ENCODE measurements at regions of chr14 and their contacts with region 1.

Region 1: DNA sequence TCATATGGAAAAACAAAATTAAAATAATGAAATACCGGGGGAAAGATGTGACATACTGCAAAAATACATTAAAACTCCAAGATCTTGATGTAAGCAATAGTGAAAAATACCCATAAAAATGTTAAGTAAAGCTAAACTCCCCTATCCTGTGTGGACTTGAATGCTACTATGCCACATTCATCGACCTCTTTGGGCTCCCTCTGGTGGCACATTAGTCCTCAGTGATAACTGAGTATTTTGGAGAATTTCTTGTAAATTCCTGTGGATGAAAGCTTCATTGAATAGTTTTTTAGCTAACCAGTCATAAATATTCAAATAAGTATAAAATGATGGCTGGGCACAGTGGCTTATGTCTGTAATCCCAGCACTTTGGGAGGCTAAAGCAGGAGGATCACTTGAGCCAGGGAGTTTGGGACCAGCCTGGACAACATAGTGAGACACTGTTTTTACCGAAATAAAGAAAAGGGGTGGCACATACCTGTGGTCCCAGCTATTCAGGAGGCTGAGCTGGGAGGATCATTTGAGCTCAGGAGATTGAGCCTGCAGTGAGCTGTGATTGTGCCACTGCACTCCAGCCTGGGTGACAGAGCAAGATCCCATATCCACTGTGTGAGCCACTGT is 42.4 kb upstream of the SGPP1 start:
- DNase-seq: peak; percentile 75
- ATAC-seq: peak; percentile 92
- H3K4me3 Mint-ChIP-seq: no peak overlapping the region
- H3K27ac Mint-ChIP-seq: peak overlapping the region; percentile 6
- H3K4me1 Mint-ChIP-seq: peaks cover 13% of the 10 kb centered on the region
- H3K27me3 Mint-ChIP-seq: no peaks in the 10 kb centered on the region

Region 2: GRCh38 chr14:63632932-63633514 is 137.3 kb before region 1 on chr14:
- CTCF ChIA-PET with region 1: interaction called, 40 read pairs
- POLR2A ChIA-PET with region 1: interaction called, 5 read pairs
- DNase-seq: no peak
- ATAC-seq: peak; percentile 68
- H3K4me3 Mint-ChIP-seq: no peak overlapping the region
- H3K27ac Mint-ChIP-seq: no peak overlapping the region
- H3K4me1 Mint-ChIP-seq: peaks cover 25% of the 10 kb centered on the region
- H3K27me3 Mint-ChIP-seq: no peaks in the 10 kb centered on the region

Region 3: DNA sequence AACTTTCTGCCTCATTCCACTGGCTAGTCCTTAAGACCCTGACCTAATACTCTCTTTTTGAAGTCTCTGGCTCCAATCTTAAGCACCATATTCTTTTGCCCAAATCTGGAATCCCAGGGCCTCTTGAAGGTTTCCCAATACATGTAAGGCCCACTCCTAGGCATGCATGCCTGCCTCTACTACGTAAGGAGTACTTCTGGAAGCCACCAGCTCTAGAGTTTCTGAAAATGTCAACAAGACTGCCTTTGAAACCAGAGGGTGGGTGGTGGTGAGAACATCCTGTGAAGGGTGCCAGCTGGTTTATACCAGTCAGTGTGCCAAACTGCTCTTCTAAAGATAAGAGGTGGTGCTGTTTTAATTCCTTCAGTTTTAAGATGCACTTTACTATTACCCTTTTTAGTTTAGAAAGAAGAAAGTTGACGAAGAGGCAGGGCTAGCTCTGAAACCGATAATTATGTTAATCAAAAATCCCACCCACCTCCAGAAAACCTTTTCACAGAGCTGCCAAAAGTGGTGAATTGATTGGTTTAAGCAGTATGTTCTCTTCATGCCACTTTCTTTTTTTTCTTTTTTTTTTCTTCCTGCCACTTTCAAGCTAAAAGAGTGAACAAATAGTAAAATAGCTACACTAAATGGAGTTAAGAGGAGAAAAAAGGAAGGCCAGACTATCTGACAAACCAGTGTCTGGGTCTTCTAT is 119.9 kb before region 1 on chr14:
- CTCF ChIA-PET with region 1: interaction called, 15 read pairs
- POLR2A ChIA-PET with region 1: no interaction called
- DNase-seq: peak; percentile 66
- ATAC-seq: peak; percentile 87
- H3K4me3 Mint-ChIP-seq: peak overlapping the region; percentile 32
- H3K27ac Mint-ChIP-seq: peak overlapping the region; percentile 94
- H3K4me1 Mint-ChIP-seq: peaks cover 18% of the 10 kb centered on the region
- H3K27me3 Mint-ChIP-seq: no peaks in the 10 kb centered on the region

Region 4: GRCh38 chr14:63737582-63738006 is 32.7 kb before region 1 on chr14:
- CTCF ChIA-PET with region 1: interaction called, 26 read pairs
- POLR2A ChIA-PET with region 1: no interaction called
- DNase-seq: peak; percentile 36
- ATAC-seq: peak; percentile 88
- H3K4me3 Mint-ChIP-seq: peak overlapping the region; percentile 64
- H3K27ac Mint-ChIP-seq: peak overlapping the region; percentile 89
- H3K4me1 Mint-ChIP-seq: peaks cover 16% of the 10 kb centered on the region
- H3K27me3 Mint-ChIP-seq: peaks cover 3% of the 10 kb centered on the region

Region 5: DNA sequence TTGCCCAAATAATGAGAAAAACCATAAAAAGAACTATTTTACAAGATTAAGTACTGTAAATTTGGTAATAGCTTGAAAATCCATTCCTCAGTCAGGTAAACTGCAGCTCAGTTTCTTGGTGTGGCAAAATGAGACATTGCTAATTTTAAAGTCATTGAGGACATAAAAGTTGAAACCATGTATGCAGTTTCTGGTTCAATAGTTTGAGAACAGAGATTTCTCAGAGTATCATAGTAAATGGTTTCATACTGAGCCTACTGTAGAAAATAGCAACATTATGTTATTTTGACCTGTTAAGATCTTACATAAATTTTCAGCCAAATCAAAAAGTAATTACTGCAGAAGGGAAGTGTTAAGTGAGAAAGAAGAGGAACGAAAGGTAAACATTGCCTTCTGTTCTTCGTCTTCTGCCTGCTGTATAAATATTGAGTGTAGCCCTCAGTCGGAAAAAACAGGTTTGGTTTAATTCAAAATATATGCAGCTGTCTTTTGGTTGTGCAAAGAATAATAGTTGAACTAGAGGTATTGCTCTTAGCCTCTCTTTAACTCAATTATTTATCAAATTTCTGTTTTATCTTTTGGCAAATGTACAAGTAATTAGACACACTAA is 202.1 kb after region 1 on chr14:
- CTCF ChIA-PET with region 1: no interaction called
- POLR2A ChIA-PET with region 1: no interaction called
- DNase-seq: no peak
- ATAC-seq: no peak
- H3K4me3 Mint-ChIP-seq: no peak overlapping the region
- H3K27ac Mint-ChIP-seq: no peak overlapping the region
- H3K4me1 Mint-ChIP-seq: no peaks in the 10 kb centered on the region
- H3K27me3 Mint-ChIP-seq: no peaks in the 10 kb centered on the region

Measured in activated CD8-positive, alpha-beta T cell treated with anti-CD3 and anti-CD28 coated beads, Interleukin-2, amount 10 ng/mL, durations not matched to agents 7 days and 5 days (primary cell).